Activated CD4-positive, alpha-beta memory T cell treated with anti-CD3 and anti-CD28 coated beads for 36 hours (primary cell): ENCODE measurements at regions of chr17 and their contacts with region 1.

Region 1: DNA sequence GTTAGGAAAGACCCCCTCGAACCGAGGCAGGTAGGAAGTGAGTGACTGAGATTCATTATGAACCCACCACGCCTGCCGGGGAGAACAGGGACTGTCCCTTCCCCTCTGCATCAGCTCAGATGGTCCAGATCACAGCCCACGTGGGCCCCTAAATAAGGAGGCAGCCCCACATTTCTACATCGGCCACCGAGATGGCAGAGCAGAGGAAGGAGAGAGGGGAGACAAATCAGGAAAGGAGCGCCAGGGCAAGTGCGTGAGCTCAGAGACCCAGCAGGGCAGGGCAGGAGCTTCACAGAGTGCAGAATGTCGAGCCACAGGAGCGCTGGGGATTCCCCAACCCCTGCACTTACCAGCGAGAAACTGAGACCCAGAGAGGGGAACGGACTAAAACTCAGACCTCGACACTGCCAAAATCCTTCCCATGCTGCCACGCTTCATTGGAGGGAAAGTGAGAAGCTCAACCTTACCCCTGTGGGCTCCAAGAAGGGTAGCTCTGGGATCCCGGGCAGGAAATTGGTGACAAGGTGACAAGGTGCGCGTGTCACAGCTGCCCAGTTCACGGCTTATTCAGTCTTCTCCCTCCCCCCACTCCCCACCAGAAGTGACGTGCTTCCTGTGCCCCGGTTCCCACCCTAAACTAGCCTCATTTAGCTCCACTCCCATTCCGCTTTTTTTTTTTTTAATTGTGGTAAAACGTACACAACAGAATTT is at the start of gene ICAM2:
- DNase-seq: peak; percentile 95
- H3K4me3 Mint-ChIP-seq: peak within 1 kb of the TSS; percentile 93
- H3K27ac Mint-ChIP-seq: peak within 1 kb of the TSS; percentile 98
- H3K4me1 Mint-ChIP-seq: peaks cover 64% of the 10 kb centered on the region
- H3K27me3 Mint-ChIP-seq: no peaks in the 10 kb centered on the region
- total RNA-seq, gene ICAM2: 65.0 to 66.7 TPM

Region 2: GRCh38 chr17:63600569-63601438 is 419.4 kb before region 1 on chr17 and contains the start of gene TACO1:
- CTCF ChIA-PET with region 1: no interaction called
- POLR2A ChIA-PET with region 1: no interaction called
- intact Hi-C with region 1: no loop called
- DNase-seq: peak; percentile 88
- H3K4me3 Mint-ChIP-seq: peak within 1 kb of the TSS; percentile 86
- H3K27ac Mint-ChIP-seq: peak within 1 kb of the TSS; percentile 86
- H3K4me1 Mint-ChIP-seq: peaks cover 39% of the 10 kb centered on the region
- H3K27me3 Mint-ChIP-seq: no peaks in the 10 kb centered on the region
- total RNA-seq, gene TACO1: 28.2 to 30.4 TPM

Region 3: DNA sequence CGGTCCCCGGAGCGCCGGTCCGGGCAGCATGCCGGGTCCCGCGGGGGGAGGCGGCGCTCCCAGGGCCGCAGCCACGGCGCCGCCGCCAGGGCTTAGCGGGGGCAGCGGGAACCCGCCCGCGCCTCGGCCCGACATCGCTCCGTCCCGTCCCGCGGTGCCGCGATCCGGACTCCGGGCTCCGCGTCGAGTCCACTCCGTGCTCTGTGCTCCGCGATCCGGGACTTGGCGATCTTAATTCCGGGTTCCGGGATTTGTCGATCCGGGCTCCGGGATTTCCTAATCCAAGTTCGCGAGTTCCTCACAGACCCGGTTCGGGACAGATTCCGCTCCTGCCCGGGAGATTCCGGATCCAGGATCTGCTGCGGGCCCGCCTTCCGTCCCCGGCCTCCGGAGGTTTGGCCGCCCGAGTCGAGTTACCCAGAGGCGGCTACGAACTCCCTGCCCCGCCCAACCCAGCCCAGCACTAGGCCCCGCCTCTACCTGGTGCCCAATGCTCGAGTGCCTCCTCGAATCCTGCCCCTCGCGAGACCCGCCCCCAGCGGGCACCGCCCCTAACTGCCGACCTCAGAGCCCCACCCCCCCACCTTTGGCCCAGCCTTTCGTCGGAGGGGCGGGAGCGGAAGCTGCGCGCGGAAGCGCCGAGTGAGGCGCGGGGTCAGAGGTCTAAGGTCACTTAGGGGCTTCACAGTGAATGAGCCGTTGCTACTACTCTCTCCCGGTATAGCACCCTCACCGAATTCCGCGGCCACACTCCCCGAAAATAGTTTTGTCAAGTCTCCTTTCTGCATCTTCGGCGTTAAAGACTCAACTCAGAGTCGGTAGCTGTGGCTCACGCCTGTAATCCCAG is 177.4 kb before region 1 on chr17 and contains the start of gene SMARCD2:
- CTCF ChIA-PET with region 1: no interaction called
- POLR2A ChIA-PET with region 1: no interaction called
- intact Hi-C with region 1: loop called (anchors 5 kb)
- DNase-seq: peak; percentile 100
- H3K4me3 Mint-ChIP-seq: peak within 1 kb of the TSS; percentile 95
- H3K27ac Mint-ChIP-seq: peak within 1 kb of the TSS; percentile 95
- H3K4me1 Mint-ChIP-seq: peaks cover 34% of the 10 kb centered on the region
- H3K27me3 Mint-ChIP-seq: no peaks in the 10 kb centered on the region
- total RNA-seq, gene SMARCD2: 109 to 111 TPM

Region 4: DNA sequence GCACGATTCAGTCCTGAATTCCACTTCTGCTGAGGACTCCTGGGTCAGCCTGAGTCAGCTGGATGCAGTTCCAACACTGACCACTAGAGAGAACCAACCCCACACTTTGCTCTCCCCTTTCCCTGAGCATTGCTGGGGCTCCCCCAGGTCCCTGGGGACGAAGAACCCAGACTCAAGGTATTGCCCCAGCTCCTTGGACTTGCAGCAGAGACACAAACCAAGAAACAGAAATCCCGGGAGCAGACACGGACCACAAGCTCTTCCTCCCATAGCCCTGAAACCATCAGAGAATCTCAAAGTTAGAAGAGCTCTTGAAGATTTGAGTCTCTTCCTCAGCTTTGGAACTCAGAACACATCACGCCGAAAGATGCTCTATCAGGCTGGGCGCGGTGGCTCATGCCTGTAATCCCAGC is 100.9 kb before region 1 on chr17:
- CTCF ChIA-PET with region 1: interaction called, 94 read pairs
- POLR2A ChIA-PET with region 1: interaction called, 4 read pairs
- intact Hi-C with region 1: loop called (anchors 1 kb)
- DNase-seq: peak; percentile 84
- H3K4me3 Mint-ChIP-seq: peak overlapping the region; percentile 27
- H3K27ac Mint-ChIP-seq: peak overlapping the region; percentile 44
- H3K4me1 Mint-ChIP-seq: peaks cover 6% of the 10 kb centered on the region
- H3K27me3 Mint-ChIP-seq: no peaks in the 10 kb centered on the region

Region 5: DNA sequence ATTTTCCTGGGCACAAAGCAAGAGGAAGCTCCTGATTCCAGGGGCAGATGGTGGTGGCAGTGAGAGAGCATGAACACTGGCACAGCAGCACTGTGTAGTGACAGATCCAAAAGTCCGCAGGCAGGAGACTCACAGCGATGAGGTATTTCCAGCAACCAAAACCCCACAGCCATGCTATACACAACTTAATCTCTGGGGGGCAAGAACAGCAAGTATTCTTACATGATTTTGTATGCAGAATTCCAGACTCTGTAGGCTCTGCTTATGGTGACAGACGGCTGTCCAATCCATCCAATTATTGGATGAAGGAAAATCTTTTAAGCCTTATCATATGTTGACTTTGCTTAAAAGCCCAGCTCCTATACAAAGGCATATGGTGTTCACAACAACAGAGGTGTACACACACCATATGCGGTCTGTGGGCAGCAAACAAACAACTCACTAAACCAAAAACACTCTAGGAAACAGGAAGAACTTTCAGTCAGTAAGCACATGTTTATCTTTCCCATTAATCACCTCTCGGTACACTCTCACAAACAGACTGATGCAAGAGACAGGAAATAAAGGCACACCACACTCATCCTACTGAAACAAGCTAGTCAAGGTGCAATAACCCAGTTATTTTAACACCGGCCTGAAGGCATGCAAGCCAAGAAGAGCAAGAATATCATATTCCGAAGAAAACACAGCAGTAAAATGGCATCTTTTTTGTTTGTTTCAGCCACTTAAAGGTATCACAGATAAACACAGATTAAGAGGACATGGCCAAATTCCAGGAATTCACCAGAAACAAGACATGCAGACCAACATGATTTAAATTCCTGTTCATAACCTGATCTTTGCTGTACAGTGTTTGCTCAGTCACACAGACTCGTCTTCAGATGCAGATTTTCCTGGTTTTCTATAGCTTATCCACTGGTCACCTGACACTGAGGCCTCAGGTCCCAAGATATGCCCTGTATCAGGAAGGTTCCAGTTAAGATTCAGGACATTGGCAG is 61.9 kb after region 1 on chr17:
- CTCF ChIA-PET with region 1: no interaction called
- POLR2A ChIA-PET with region 1: interaction called, 4 read pairs
- intact Hi-C with region 1: loop called (anchors 1 kb)
- DNase-seq: peak; percentile 74
- H3K4me3 Mint-ChIP-seq: peak overlapping the region; percentile 49
- H3K27ac Mint-ChIP-seq: no peak overlapping the region
- H3K4me1 Mint-ChIP-seq: peaks cover 29% of the 10 kb centered on the region
- H3K27me3 Mint-ChIP-seq: no peaks in the 10 kb centered on the region